AG04450 (cell line): ENCODE measurements at regions of chr3 and their contacts with region 1.

Region 1: DNA sequence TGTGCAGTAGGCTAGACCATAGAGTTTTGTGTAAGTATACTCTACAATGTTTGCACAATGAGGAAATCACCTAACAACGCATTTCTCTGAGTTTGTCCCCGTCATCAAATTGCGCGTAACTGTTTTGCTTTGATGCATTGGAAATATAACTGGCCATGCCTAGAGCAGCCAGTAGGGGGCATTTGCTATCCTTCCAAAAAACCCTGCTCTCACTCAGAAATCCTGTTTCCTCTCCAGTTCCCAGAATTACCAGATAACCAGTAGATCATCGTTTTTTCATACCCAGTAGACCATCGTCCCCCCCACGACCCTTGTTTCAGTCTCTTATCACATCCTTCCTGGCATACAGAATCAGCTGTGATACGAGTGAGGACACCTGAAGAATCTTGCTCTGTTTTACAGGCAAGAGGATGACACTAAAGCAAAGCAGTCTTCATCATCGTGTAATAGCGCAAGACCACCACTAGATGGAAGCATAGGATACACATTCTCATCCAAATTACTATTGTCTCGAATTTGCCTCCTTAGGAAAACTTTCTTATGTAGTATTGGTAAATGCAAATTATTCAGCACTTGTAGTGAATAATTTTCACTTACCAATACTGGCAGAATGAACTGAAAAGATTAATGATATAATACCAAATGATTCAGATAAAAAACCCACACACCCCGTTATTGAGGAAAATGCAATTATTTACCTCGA is 4.4 kb upstream of the GABRR3 start:
- DNase-seq: peak; percentile 65
- H3K4me3 ChIP-seq: peak overlapping the region; percentile 61
- H3K27ac ChIP-seq: no peak overlapping the region
- H3K27me3 ChIP-seq: no peaks in the 10 kb centered on the region
- CTCF ChIP-seq: peak; percentile 78

Region 2: DNA sequence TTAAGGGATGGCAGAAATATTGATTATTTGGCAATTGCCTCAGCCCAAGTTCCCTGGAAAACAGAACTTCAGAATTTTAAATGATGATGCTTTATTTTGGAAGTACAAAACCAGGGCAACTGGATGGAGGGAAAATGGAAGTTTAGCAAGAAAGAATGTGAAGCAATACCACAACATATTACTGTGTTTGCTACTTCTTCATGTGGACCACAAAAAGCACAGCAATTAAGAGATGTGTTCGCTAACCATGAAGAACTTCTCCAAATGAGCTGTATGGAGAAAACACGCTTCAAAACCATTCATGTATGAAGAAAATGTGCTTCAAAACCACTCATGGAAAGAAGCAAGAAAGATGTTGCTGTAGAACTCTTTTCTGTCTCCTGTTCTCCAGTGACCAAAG is 339.6 kb before region 1 on chr3:
- CTCF ChIA-PET with region 1: no interaction called
- POLR2A ChIA-PET with region 1: no interaction called
- DNase-seq: no peak
- H3K4me3 ChIP-seq: no peak overlapping the region
- H3K27ac ChIP-seq: no peak overlapping the region
- H3K27me3 ChIP-seq: no peaks in the 10 kb centered on the region
- CTCF ChIP-seq: no peak

Region 3: GRCh38 chr3:97793420-97794019 is 246.0 kb before region 1 on chr3:
- CTCF ChIA-PET with region 1: interaction called, 14 read pairs
- POLR2A ChIA-PET with region 1: no interaction called
- DNase-seq: peak; percentile 20
- H3K4me3 ChIP-seq: no peak overlapping the region
- H3K27ac ChIP-seq: no peak overlapping the region
- H3K27me3 ChIP-seq: no peaks in the 10 kb centered on the region
- CTCF ChIP-seq: peak; percentile 79

Region 4: GRCh38 chr3:98013411-98014267 is 25.8 kb before region 1 on chr3:
- CTCF ChIA-PET with region 1: interaction called, 34 read pairs
- POLR2A ChIA-PET with region 1: no interaction called
- DNase-seq: no peak
- H3K4me3 ChIP-seq: no peak overlapping the region
- H3K27ac ChIP-seq: no peak overlapping the region
- H3K27me3 ChIP-seq: no peaks in the 10 kb centered on the region
- CTCF ChIP-seq: no peak

Region 5: DNA sequence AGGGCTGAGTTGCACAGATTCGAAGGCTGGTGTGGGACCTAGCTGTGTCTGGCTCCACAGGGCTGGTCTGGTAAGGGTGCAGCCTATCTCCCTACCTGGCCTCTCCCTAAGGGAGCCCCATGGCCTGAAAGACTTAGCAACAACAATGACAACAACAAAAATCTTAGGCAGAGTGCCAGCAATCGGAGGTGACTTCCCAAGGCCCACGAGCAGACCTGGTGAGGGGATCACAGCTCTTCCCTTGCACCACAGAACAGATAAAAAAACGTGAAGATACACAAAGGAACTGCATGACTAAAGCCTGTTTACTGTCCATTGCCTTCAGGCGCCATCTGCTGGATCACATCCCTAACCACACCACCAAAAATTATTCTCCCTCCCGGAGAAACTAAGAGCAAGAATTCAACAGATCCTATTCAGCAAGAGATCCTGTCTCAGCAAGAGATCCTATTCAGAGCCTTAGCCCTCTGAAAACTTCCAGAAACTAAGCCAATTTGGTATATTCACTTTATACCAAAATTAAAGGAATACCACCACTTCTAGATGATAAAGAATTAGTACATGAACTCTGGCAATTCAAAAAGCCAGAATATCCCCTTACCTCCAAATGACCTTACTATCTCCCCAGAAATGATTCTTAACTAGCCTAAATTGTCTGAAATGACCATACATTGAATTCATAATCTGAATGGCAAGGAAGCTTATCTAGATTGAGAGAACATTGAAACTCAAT is 290.1 kb after region 1 on chr3:
- CTCF ChIA-PET with region 1: interaction called, 209 read pairs
- POLR2A ChIA-PET with region 1: no interaction called
- DNase-seq: peak; percentile 6
- H3K4me3 ChIP-seq: no peak overlapping the region
- H3K27ac ChIP-seq: no peak overlapping the region
- H3K27me3 ChIP-seq: no peaks in the 10 kb centered on the region
- CTCF ChIP-seq: peak; percentile 85